ENCODE measurements at regions of chr7 and their contacts with region 1.

Region 1: DNA sequence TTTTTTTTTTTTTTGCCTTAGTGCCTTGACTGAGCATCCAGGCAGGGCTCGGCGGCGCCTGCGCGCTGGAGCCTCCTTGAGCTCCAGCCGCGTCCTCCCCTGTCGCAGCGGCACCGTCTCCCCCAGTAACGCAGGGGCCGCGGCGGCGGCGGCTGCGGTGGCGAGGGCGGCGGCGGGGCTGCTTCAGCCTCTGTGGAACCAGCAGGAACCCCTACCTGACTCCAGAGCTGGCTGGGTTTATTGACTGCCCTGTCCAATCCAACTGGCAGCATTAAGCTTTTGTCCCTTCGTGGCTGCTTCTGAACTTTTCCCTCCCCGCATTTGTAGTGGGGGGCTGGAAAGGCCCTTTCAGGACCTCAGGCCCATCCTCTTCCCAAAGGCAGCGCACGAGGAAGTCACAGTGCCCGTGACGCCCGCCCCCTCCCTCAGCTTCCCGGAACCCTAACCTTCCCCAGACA is at the start of gene GPR85:
- DNase-seq: peak; percentile 62 to 88 (median 76)
- ATAC-seq: peak; percentile 92
- H3K4me3 ChIP-seq: peak within 1 kb of the TSS; percentile 49
- H3K27ac ChIP-seq: peak within 1 kb of the TSS; percentile 64
- H3K4me1 ChIP-seq: peaks cover 8 to 33% of the 10 kb centered on the region in 2 experiments
- H3K27me3 ChIP-seq: no peaks in the 10 kb centered on the region
- CTCF ChIP-seq: no peak
- EP300 ChIP-seq: no peak
- POLR2A ChIP-seq: no peak; the same call in 1 of the 2 replicates
- RAD21 ChIP-seq: no peak
- polyA plus RNA-seq, gene GPR85: 2.9 to 3.3 TPM

Region 2: DNA sequence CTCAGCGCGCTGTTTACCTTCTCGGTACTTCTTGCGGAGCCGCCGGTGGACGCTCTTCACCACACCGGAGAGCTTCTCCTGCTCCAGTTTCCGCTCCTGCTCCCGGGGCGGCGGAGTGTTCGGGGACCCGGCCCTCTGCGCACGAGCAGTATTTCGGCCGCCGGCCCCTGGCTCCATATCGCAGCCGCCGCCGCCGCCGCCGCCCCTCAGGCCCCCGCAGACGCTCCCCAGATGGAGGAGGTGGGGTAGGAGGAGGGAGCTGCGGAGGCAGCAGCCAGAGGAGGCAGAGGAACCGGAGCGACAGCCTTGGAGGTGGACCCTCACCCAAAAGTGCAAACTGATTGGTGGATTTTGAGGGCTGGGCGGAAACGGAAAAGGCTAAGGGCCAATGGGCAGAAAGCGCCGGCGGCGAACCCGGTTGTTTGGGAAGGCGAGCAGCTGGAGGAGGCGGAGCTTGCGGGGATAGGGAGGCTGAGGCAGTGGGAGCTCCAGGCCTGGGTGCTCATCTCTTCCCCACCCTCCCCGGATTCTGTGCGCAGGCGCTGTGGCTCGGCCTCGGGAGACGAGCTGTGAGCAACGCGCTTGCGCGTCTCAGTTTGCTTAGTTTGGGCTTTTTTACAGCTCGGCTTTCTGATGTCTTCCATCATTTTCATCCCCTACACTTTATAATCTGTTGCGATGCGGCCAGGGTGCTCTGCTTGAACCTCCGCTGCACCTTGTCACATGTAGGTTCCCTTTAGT is 146.7 kb before region 1 on chr7:
- CTCF ChIA-PET with region 1: no interaction called
- POLR2A ChIA-PET with region 1: no interaction called
- in situ Hi-C with region 1: no loop called
- intact Hi-C with region 1: loop called (anchors 1 kb)
- DNase-seq: peak; percentile 100
- ATAC-seq: peak; percentile 99
- H3K4me3 ChIP-seq: peak overlapping the region; percentile 81
- H3K27ac ChIP-seq: peak overlapping the region; percentile 80
- H3K4me1 ChIP-seq: peaks cover 3 to 7% of the 10 kb centered on the region in 2 experiments; a peak in 3 of 5 replicates
- H3K27me3 ChIP-seq: no peaks in the 10 kb centered on the region
- CTCF ChIP-seq: no peak
- EP300 ChIP-seq: no peak
- POLR2A ChIP-seq: peak; percentile 90; the same call in 1 of the 2 replicates
- RAD21 ChIP-seq: peak in 1 of 2 experiments; percentile 29; a peak in 1 of 4 replicates

Region 3: GRCh38 chr7:112959276-112959675 is 127.2 kb before region 1 on chr7:
- CTCF ChIA-PET with region 1: no interaction called
- POLR2A ChIA-PET with region 1: no interaction called
- in situ Hi-C with region 1: no loop called
- intact Hi-C with region 1: no loop called
- DNase-seq: no peak
- ATAC-seq: no peak
- H3K4me3 ChIP-seq: no peak overlapping the region
- H3K27ac ChIP-seq: no peak overlapping the region
- H3K4me1 ChIP-seq: no peaks in the 10 kb centered on the region
- H3K27me3 ChIP-seq: no peaks in the 10 kb centered on the region
- CTCF ChIP-seq: no peak
- EP300 ChIP-seq: no peak
- POLR2A ChIP-seq: no peak
- RAD21 ChIP-seq: no peak

Region 4: DNA sequence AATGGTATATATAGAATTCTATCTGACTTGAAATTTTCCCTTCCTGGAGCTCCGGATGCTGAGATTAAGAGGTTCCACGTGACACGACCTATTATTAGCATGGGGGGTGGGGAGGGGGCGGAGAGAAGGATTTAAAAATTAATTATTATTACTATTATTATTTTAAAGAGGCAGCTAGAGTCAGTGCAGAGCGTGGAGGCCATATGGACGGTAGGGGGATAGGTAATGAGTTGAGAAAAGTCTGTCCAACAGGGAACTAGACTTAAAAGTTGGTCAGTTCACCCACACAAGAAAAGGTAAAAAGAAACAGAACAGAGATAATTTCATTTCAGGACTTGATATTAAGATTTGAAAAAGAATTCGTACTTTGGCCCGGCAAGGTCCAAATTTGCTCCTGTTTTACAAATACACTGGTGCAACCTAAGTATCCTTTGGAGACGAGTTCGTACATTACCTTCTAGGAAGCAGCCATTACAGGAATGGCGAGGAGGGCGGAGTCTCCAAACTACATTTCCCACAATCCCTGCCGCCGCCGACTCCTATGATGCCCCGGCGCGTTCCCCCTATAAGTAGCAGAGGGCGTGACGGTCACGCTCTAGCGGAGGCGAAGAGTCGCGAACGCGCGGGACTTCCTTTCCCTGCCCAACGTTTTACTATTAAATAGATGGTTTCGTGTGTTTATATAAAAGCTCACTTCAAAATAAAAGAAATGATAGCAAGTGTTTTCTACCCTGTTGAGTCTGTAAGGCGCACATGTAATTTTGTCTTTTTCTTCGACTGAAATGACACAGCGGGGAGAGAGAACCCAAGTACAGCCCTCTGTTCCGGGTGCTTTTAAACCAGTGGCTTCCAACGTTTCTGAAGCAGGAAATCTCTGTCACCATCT is 31.9 kb after region 1 on chr7 and contains the start of gene SMIM30:
- CTCF ChIA-PET with region 1: no interaction called
- POLR2A ChIA-PET with region 1: interaction called, 6 read pairs
- in situ Hi-C with region 1: no loop called
- intact Hi-C with region 1: loop called (anchors 2 kb)
- DNase-seq: peak; percentile 89 to 99 (median 93)
- ATAC-seq: peak; percentile 99
- H3K4me3 ChIP-seq: peak within 1 kb of the TSS; percentile 59
- H3K27ac ChIP-seq: peak within 1 kb of the TSS; percentile 75
- H3K4me1 ChIP-seq: peaks cover 0 to 23% of the 10 kb centered on the region in 2 experiments; a peak in 3 of 5 replicates
- H3K27me3 ChIP-seq: no peaks in the 10 kb centered on the region
- CTCF ChIP-seq: peak in 2 of 3 experiments; percentile 10 to 18; a peak in 1 of 6 replicates
- EP300 ChIP-seq: peak; percentile 22; the same call in 1 of the 2 replicates
- POLR2A ChIP-seq: peak; percentile 96
- RAD21 ChIP-seq: no peak; a peak in 1 of 4 replicates
- polyA plus RNA-seq, gene SMIM30: 675 to 891 TPM

Region 5: DNA sequence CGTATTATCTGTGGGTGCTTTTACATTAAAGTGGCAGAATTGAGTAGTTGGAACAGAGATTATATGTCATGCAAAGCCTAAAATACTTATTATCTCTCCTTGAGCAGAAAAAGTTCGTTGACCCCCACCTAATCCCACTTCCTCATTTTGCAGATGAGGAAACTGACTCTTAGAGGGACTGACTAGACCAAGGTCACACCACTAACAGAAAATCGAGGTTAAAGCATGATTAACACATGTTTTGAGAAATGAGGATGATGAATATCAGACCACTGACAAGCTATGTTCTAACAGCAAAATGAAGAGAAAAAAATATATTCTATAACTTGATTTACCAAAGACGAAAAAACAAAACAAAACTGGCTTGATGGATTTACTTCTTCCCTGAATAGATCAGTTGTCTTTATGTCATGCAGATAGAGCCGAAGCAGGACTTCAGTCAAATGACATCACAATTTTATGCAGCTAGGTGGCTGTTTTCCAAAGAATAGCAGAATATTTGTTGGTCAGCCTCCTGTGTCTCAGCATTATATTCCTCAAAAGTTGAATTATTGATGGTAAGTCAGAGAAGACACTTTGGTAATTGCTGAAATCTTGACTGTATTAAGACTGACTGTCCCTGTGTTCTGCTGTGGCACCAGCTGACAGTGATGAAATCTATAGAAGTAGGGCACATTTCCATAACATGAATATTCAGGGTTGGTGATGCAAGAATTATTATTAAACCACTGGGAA is 56.1 kb after region 1 on chr7:
- CTCF ChIA-PET with region 1: no interaction called
- POLR2A ChIA-PET with region 1: no interaction called
- in situ Hi-C with region 1: no loop called
- intact Hi-C with region 1: loop called (anchors 1 kb)
- DNase-seq: peak in 2 of 4 experiments; percentile 70 to 85
- ATAC-seq: peak; percentile 79
- H3K4me3 ChIP-seq: no peak overlapping the region
- H3K27ac ChIP-seq: peak overlapping the region; percentile 69
- H3K4me1 ChIP-seq: peaks cover 11 to 54% of the 10 kb centered on the region in 2 experiments
- H3K27me3 ChIP-seq: no peaks in the 10 kb centered on the region
- CTCF ChIP-seq: no peak
- EP300 ChIP-seq: peak; percentile 98
- POLR2A ChIP-seq: no peak
- RAD21 ChIP-seq: no peak; a peak in 1 of 4 replicates

Measured in K562 (cell line).